B cell (primary cell): ENCODE measurements at regions of chr1 and their contacts with region 1.

Region 1: DNA sequence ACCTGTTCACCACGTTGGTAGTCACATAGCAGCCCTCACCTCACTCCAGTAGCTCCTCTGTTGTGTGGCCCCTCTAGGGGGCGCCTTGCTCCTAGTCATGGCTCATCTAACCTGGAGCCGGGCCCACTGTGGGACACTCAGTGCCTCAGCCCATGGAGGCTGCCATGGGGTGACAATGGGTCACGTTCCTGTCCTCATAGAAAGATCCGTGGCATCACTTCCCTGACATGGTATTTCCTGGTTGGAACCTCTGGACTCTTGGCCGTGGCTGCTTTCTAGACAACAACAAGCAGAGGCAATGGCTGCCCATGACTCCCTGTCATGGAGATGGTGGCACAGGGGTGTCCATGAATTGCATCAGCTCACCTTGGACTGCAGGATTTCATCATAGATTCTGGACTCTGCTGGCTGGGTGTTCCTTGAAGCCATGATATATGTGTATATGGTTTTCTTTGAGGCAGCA is 27.5 kb upstream of the SLAMF6 start:
- DNase-seq: no peak
- ATAC-seq: no peak
- H3K4me3 ChIP-seq: no peak overlapping the region
- H3K4me3 Mint-ChIP-seq: peak overlapping the region; percentile 8
- H3K27ac ChIP-seq: peak overlapping the region in 1 of 2 donors; percentile 88
- H3K27ac Mint-ChIP-seq: peak overlapping the region; percentile 94
- H3K4me1 ChIP-seq: peaks cover 65 to 67% of the 10 kb centered on the region in 2 donors
- H3K4me1 Mint-ChIP-seq: peaks cover 81% of the 10 kb centered on the region
- H3K27me3 ChIP-seq: no peaks in the 10 kb centered on the region
- H3K27me3 Mint-ChIP-seq: no peaks in the 10 kb centered on the region
- CTCF ChIP-seq: no peak

Region 2: DNA sequence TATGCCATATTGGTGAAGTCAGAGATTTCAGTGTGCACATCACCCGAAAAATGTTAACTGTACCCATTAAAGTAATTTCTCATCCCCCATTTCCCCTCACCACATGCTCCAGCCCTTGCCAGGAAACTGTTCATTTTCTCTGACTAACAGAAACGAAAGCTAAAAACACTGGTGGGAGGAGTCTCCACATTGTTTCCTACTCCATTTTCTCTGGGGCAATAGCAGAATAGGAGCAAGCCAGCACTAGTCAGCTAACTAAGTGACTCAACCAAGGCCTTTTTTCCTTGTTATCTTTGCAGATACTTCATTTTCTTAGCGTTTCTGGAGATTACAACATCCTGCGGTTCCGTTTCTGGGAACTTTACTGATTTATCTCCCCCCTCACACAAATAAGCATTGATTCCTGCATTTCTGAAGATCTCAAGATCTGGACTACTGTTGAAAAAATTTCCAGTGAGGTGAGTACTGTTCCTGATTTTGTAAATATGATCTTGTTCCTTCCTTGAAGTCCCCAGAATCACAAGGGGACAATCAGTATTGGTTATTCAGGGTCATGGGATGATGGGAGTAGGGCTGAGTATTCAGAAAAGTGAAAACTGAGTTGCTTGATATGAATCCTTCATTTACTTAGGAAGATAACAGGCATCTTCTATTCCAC is 1540.8 kb before region 1 on chr1 and contains the start of gene IFI16:
- CTCF ChIA-PET with region 1: no interaction called
- POLR2A ChIA-PET with region 1: no interaction called
- intact Hi-C with region 1: no loop called
- DNase-seq: peak; percentile 71
- ATAC-seq: peak; percentile 70
- H3K4me3 ChIP-seq: peak within 1 kb of the TSS; percentile 71 to 100 (median 91)
- H3K4me3 Mint-ChIP-seq: peak within 1 kb of the TSS; percentile 98
- H3K27ac ChIP-seq: peak within 1 kb of the TSS; percentile 66 to 88
- H3K27ac Mint-ChIP-seq: peak within 1 kb of the TSS; percentile 94
- H3K4me1 ChIP-seq: peaks cover 56 to 59% of the 10 kb centered on the region in 2 donors
- H3K4me1 Mint-ChIP-seq: peaks cover 67% of the 10 kb centered on the region
- H3K27me3 ChIP-seq: no peaks in the 10 kb centered on the region
- H3K27me3 Mint-ChIP-seq: no peaks in the 10 kb centered on the region
- CTCF ChIP-seq: no peak
- total RNA-seq, gene IFI16: 150 and 176 TPM in 2 replicates

Region 3: DNA sequence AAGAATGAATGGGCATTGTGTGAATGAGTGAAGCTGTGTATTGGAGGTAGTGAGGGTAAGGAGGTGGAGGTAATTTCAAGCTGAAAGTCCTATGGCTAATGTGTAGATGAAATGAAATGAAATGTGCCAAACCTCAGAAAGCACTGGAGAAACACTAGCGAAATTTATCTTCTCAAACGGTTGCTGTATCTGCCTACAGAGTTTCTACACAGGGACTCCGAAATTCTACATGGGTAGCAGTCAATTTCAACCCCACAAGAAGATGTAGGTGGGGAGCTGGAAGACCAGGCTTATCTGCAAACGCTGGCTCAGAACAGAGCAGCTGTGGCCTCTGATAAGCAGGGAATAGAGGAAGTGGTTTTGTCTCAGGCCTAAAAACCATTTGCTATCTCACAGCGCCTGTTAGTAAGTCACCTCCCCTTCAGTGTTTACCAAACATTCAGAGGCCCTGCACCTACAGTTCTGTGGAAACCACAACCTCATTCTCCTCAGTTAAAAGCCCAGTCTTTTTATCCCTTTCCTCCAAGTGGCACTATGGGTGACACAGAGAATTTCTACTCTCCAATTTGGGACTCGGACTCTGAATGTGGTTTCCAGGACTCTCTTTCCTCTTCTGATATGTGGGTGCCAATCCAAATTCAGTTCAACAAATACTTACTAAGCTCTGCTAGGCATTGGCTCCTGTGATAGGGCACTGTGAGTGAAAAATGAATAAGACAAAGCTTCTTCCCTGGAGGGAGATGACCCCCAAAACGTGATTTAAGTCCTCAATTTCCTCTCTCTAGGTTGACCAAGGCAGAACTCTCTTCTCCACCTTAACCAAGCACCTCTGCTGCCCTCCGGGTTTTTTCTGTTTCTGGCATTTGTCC is 10.4 kb before region 1 on chr1:
- CTCF ChIA-PET with region 1: interaction called, 9 read pairs
- POLR2A ChIA-PET with region 1: interaction called, 6 read pairs
- intact Hi-C with region 1: loop called (anchors 1 kb)
- DNase-seq: peak; percentile 81
- ATAC-seq: peak; percentile 97
- H3K4me3 ChIP-seq: peak overlapping the region in 1 of 5 experiments; percentile 19
- H3K4me3 Mint-ChIP-seq: peak overlapping the region; percentile 63
- H3K27ac ChIP-seq: peak overlapping the region; percentile 72 to 90
- H3K27ac Mint-ChIP-seq: peak overlapping the region; percentile 93
- H3K4me1 ChIP-seq: peaks cover 46% of the 10 kb centered on the region in 2 donors
- H3K4me1 Mint-ChIP-seq: peaks cover 48% of the 10 kb centered on the region
- H3K27me3 ChIP-seq: no peaks in the 10 kb centered on the region
- H3K27me3 Mint-ChIP-seq: no peaks in the 10 kb centered on the region
- CTCF ChIP-seq: no peak

Region 4: DNA sequence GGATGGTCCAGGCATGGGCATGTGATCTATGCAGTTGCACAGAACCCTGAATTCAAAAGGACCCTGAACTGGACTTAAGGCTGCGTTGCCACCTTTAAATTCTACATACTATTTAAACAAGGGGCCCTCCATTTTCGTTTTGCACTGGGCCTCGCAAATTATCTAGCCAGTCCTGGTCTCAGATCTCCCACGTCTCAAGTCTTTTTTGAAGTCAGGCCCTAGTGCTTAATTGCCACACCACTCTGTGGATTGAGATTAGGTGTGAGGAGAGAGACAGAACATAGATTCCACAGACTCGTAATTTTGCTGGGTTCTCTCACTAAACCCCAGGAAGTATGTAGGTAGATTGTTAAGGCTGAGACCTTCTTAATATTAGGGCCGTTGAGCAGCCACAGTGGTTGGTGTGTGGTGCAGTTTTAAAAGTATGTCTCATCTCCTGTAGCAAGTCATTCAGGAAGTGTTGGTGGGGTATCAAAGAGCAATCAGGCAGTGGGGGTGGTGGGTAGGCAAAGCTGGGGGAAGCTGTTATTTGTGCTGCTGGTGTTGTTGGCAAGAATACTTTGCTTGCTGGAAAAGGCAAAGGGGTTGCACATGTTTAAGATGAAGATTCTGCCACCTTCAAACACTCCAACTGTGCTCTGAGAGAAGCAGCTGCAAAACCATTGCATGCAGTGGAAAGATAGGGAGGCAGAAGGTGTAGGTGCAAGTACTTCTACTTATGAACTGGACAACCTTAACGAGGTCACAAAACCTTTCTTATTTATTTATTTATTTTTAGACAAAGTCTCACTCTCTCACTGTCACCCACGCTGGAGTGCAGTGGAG is 17.5 kb after region 1 on chr1:
- CTCF ChIA-PET with region 1: interaction called, 6 read pairs
- POLR2A ChIA-PET with region 1: interaction called, 3 read pairs
- intact Hi-C with region 1: loop called (anchors 2 kb)
- DNase-seq: no peak
- ATAC-seq: peak; percentile 47
- H3K4me3 ChIP-seq: no peak overlapping the region
- H3K4me3 Mint-ChIP-seq: peak overlapping the region; percentile 27
- H3K27ac ChIP-seq: peak overlapping the region in 1 of 2 donors; percentile 54
- H3K27ac Mint-ChIP-seq: peak overlapping the region; percentile 77
- H3K4me1 ChIP-seq: peaks cover 16 to 33% of the 10 kb centered on the region in 2 donors
- H3K4me1 Mint-ChIP-seq: peaks cover 68% of the 10 kb centered on the region
- H3K27me3 ChIP-seq: no peaks in the 10 kb centered on the region
- H3K27me3 Mint-ChIP-seq: no peaks in the 10 kb centered on the region
- CTCF ChIP-seq: no peak

Region 5: DNA sequence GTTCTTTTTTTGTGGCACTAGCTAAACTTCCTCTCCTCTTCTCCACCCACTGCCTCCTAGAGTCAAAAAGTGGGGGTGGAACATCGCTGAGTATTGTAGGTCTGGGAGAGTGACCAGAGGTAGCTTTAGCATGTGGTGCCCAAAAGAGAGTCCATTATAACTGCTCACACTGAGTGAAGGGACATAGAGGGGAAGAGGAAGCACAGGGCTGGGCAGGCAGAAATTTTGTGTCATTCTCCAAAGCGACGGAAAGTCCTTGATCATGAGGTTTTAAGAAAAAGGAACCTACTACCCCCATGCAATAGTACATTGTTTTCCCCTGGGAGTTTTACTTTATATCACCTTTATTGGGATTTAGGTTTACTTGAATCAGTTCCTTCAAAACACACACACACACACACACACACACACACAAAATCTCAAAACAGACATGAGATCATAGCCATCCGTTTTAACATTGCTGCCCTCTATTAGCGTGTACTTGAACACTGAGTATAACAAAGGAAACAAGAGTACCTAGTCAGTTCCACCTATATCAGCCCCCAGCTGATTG is 24.6 kb after region 1 on chr1:
- CTCF ChIA-PET with region 1: interaction called, 11 read pairs
- POLR2A ChIA-PET with region 1: interaction called, 4 read pairs
- intact Hi-C with region 1: loop called (anchors 1 kb)
- DNase-seq: peak; percentile 78
- ATAC-seq: peak; percentile 74
- H3K4me3 ChIP-seq: peak overlapping the region in 3 of 5 experiments; percentile 9 to 89 (median 27)
- H3K4me3 Mint-ChIP-seq: peak overlapping the region; percentile 76
- H3K27ac ChIP-seq: peak overlapping the region; percentile 59 to 74
- H3K27ac Mint-ChIP-seq: peak overlapping the region; percentile 90
- H3K4me1 ChIP-seq: peaks cover 52 to 53% of the 10 kb centered on the region in 2 donors
- H3K4me1 Mint-ChIP-seq: peaks cover 76% of the 10 kb centered on the region
- H3K27me3 ChIP-seq: no peaks in the 10 kb centered on the region
- H3K27me3 Mint-ChIP-seq: no peaks in the 10 kb centered on the region
- CTCF ChIP-seq: no peak

Region 6: DNA sequence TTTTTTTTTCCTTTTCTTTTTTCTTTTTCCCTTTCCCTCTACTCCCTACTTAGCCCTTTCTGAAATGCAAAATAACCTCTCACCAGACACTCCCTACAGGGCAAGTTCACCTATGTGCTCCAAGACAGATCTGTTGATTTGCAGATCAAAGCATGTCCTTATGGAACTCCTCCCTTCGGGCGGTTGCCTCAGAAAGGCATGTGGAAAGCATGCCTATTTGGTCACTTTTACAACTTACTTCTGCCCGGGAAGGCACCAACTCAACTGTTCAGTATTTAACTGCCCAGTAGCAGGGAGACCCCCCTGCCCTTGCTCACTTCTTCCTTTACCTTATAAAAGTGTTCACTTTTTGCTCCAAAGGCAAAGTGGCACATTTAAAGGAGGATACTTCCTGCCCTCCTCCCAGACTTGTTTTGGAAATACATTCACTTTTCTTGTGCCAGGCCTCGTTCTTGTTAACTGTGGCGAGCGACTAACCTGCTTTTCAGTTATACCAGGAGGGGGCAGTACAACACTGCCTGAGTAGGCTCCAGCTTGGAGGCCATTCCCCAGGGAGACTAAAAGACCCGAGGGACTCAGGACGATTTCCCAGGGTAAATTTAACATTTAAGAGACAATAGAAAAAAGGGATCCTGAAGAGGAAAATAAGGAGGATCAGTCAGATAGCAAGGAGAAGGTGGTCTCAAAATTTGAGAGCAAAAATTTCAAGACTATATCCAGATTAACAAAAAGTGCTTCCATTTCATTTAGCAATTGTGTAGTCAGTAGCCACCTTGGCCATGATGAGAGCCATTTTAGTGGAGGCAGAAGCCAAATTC is 176.1 kb after region 1 on chr1:
- CTCF ChIA-PET with region 1: no interaction called
- POLR2A ChIA-PET with region 1: no interaction called
- intact Hi-C with region 1: no loop called
- DNase-seq: peak; percentile 88
- ATAC-seq: peak; percentile 93
- H3K4me3 ChIP-seq: peak overlapping the region in 1 of 5 experiments; percentile 17
- H3K4me3 Mint-ChIP-seq: no peak overlapping the region
- H3K27ac ChIP-seq: no peak overlapping the region
- H3K27ac Mint-ChIP-seq: no peak overlapping the region
- H3K4me1 ChIP-seq: peaks cover 8 to 12% of the 10 kb centered on the region in 2 donors
- H3K4me1 Mint-ChIP-seq: peaks cover 10% of the 10 kb centered on the region
- H3K27me3 ChIP-seq: no peaks in the 10 kb centered on the region
- H3K27me3 Mint-ChIP-seq: no peaks in the 10 kb centered on the region
- CTCF ChIP-seq: peak; percentile 99

Region 7: DNA sequence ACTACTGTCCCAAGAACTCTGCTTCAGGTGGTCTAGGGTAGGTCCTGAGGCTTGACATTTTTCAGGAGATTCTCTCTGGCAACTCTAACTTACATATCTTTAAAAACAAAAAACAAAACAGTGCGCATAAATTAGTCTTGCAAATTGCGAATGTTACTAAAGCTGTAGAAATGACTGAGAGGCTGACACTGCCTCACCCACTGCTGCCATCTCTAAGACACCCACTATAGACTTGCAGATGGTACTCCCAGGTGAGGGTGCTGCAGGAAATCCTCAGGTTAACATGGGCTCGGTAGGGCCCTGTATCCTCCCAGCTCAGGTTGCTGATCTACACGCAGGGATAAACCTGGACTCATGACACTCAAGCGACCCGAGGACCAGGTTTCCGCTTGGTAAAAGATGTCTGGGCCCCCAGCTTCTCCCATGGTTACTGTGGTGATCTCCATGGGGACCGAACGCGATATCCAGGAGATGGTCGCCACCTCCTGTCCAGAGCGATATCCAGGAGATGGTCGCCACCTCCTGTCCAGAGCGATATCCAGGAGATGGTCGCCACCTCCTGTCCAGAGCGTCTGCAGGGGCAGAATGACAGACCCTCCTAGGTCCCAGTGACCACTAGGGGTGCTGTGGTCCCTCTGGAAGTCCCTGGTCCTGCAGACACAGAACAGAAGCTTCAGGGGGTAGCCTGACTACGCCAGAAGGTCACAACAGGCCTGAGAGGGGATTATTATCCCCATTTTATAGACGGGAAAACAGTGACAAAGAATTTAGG is 229.2 kb after region 1 on chr1:
- CTCF ChIA-PET with region 1: no interaction called
- POLR2A ChIA-PET with region 1: no interaction called
- intact Hi-C with region 1: no loop called
- DNase-seq: peak; percentile 55
- ATAC-seq: no peak
- H3K4me3 ChIP-seq: no peak overlapping the region
- H3K4me3 Mint-ChIP-seq: no peak overlapping the region
- H3K27ac ChIP-seq: no peak overlapping the region
- H3K27ac Mint-ChIP-seq: peak overlapping the region; percentile 68
- H3K4me1 ChIP-seq: peaks cover 49 to 64% of the 10 kb centered on the region in 2 donors
- H3K4me1 Mint-ChIP-seq: peaks cover 76% of the 10 kb centered on the region
- H3K27me3 ChIP-seq: no peaks in the 10 kb centered on the region
- H3K27me3 Mint-ChIP-seq: no peaks in the 10 kb centered on the region
- CTCF ChIP-seq: peak; percentile 65